ENCODE measurements at regions of chr20 and their contacts with region 1.

Region 1: DNA sequence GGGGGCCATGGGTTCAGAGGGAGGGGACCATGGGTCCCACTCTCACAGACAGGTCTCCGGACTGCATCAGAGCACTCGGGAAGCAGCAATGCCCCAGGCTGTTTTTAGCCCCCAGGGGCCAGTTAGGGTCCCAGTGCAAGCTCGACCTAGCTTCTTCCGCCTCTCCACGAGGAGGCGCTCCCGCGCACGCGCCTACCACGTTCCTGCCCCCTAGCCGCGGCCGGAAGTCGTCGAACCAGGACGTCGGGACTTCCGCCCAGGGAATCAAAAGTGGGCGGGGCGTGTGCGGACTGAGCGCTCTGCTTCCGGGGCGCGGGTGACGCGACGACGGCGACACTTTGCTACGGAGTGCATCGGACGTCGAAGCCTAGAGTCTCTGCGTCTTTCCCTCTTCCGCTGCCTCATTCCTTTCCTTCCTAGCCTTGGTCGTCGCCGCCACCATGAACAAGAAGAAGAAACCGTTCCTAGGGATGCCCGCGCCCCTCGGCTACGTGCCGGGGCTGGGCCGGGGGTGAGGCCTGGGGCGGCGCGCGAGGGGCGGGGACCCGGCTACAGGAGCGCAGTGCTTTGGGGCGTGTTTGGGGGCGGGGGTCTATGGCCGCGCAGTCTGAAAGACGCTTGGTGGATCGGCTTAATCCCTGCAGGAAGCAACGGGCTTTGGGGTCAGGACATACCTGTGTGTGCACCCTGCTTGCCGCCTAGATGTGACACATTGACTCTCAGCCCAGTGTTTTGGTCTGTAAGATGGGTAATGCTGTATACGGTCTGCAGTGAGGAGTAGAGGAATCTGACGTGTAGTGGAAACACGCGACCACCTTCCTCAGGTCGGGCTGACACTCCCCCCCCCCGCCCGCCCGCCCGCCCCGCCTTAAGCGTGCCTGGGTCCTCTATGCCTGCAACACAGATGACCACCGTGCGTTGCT is at the start of gene PRPF6:
- DNase-seq: peak; percentile 96
- H3K4me3 Mint-ChIP-seq: peak within 1 kb of the TSS; percentile 94
- H3K27ac Mint-ChIP-seq: peak within 1 kb of the TSS; percentile 98
- H3K4me1 Mint-ChIP-seq: peaks cover 62% of the 10 kb centered on the region
- H3K27me3 Mint-ChIP-seq: no peaks in the 10 kb centered on the region
- total RNA-seq, gene PRPF6: 67.1 to 70.8 TPM

Region 2: DNA sequence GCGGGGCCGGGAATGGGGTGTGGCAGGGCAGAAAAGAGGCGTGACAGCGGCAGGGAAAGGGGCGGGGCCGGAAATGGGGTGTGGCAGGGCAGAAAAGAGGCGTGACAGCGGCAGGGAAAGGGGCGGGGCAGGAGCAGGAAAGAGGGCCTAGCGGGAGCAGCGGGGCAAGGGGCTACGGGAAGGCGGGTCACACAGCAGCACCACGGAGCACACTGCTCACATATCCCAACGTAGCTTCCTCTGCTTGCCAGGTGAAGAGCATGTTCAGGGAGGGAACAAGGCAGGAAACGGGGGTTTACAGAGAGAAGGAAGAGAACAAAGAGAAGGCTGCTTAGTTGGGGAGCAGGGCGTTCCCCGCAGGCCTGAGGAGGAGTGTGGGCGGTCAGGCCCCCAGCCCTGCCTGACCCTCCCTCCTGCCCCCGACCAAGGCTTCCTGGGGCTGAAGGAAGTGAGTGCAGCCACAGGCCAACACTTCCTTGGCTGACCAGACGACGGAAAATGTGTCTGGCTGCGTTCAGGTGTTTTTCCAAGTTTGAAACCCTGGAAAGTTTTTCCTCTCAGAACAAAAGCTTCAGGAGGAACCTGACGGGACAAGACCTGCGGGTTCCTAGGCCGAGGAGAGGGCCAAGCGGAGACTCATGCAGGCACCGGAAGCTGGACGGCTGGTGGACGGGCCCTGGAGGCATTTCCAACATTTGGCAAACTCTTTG is 38.7 kb before region 1 on chr20:
- CTCF ChIA-PET with region 1: no interaction called
- POLR2A ChIA-PET with region 1: no interaction called
- DNase-seq: peak; percentile 67
- H3K4me3 Mint-ChIP-seq: peak overlapping the region; percentile 27
- H3K27ac Mint-ChIP-seq: peak overlapping the region; percentile 95
- H3K4me1 Mint-ChIP-seq: peaks cover 35% of the 10 kb centered on the region
- H3K27me3 Mint-ChIP-seq: no peaks in the 10 kb centered on the region

Region 3: DNA sequence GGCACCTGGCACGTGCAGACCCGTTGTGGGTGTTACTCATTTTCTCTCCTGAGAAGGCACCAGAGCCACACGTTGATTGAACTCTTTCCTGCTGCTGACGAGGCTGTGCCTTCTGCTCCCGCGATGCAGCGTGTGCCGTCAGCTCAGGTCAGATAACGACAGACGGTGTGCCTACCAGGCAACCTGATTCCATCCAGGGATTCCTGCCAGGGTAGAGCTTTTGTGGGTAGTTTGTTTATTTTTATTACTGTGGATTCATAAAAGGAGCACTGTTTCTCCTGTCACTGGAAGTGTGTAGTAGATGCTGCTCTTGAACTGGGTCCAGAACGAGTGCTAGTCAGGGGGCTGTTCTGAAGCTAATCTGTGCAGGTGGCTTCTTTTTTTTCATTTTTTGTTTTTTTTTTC is 20.5 kb after region 1 on chr20:
- CTCF ChIA-PET with region 1: interaction called, 10 read pairs
- POLR2A ChIA-PET with region 1: no interaction called
- DNase-seq: no peak
- H3K4me3 Mint-ChIP-seq: no peak overlapping the region
- H3K27ac Mint-ChIP-seq: no peak overlapping the region
- H3K4me1 Mint-ChIP-seq: no peaks in the 10 kb centered on the region
- H3K27me3 Mint-ChIP-seq: no peaks in the 10 kb centered on the region

Region 4: DNA sequence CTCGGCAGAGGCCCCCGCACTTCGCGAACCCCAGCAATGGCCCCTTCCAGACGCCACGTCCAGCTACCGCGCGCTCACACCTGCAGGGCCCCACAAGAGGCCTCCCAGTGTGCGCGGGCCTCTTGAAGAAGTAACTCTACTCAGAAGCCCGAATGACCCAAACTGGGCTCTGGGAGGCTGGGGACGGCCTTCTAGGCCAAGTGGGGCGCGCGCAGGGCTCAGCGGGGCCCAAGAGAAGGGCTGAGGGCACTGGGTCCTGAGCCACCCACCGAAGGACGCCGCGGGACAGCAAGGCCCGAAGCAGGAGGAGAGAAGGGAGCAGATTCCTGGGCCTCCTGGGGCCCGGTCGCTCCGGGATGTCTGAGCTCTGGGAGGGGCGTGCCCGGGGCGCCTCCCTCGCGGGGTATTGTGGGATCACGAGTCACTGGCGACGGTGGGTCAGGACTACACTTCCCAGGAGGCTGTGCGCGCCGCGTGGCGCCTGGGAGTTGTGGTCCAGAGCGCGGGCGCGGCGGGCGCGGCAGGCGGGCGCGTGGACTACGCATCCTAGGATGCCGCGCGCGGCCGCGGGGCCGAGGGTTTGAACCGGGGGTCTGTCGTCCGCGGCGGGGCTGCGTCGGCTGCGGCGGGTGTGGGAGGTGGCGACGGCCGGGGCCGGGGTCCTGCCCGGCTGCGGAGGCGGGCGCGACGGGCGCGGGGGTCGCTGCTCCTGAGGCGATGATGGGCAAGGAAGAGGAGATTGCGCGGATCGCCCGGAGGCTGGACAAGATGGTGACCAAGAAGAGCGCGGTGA is 81.7 kb after region 1 on chr20 and contains the start of gene TCEA2:
- CTCF ChIA-PET with region 1: interaction called, 12 read pairs
- POLR2A ChIA-PET with region 1: no interaction called
- DNase-seq: peak; percentile 96
- H3K4me3 Mint-ChIP-seq: peak within 1 kb of the TSS; percentile 92
- H3K27ac Mint-ChIP-seq: peak within 1 kb of the TSS; percentile 91
- H3K4me1 Mint-ChIP-seq: peaks cover 64% of the 10 kb centered on the region
- H3K27me3 Mint-ChIP-seq: no peaks in the 10 kb centered on the region
- total RNA-seq, gene TCEA2: 47.6 to 57.9 TPM

Region 5: DNA sequence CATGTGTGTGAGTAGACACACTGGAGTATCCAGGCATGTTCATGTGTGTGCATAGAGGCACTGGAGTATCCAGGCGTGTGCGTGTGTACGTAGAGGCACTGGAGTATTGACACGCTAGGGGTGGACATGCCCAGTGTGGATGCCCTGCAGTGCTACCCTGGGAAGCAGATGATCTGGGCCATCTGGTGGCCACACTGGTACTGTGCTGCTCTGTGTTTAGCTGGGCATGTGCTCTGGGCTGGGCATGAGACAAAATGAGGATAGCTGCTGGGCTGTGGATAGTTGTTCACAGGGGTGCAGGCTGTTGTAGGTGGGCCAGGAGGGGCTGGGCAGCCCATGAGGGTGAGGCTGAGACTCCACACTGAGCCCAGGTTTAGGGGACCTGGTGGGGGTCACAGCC is 150.3 kb after region 1 on chr20:
- CTCF ChIA-PET with region 1: no interaction called
- POLR2A ChIA-PET with region 1: no interaction called
- DNase-seq: no peak
- H3K4me3 Mint-ChIP-seq: no peak overlapping the region
- H3K27ac Mint-ChIP-seq: no peak overlapping the region
- H3K4me1 Mint-ChIP-seq: no peaks in the 10 kb centered on the region
- H3K27me3 Mint-ChIP-seq: peaks cover 15% of the 10 kb centered on the region